ENCODE measurements at regions of chr7 and their contacts with region 1.

Region 1: DNA sequence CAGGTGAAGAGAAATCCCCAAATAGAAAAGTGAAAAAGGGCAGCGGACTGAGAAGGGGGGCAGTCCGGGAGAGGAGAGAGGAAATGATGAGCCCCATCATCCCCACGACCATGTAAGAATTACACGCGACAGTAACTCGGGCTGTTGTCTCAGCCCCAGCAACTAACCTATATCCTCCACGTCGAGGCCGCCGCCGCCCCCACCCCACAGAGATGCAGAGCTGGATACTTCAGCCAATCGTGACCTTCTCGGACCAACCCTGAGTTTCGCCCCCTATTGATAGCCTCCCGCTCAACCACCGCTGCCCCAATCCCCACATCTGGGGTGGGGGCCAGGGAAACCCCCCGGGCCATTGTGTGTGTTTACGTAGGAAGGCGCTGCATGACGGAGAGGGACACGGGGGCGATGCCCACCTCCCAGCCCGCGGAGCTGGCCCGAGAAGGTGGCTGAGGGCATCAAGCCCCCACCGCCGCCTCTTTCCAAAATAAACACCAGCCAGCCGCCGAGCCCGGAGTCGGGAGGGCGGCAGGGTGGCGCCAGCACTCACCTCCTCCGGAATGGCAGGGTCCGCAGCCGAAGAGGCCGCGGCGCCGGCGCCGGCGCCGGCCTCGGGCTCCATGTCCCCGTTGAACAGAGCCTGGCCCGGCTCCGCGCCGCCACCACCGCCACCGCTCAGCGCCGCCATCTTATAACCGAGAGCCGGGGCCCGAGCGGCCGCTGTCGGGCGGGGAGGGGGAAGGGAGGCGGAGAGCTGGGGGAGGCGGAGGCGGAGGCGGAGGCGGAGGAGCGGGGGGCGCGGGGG is 509 bp downstream of the BRAF start:
- DNase-seq: peak; percentile 68
- ATAC-seq: peak; percentile 86
- H3K4me3 ChIP-seq: peak overlapping the region; percentile 99
- H3K27ac ChIP-seq: peak overlapping the region; percentile 91
- H3K4me1 ChIP-seq: no peaks in the 10 kb centered on the region
- H3K27me3 ChIP-seq: no peaks in the 10 kb centered on the region; the same call in 1 of the 2 replicates
- CTCF ChIP-seq: peak; percentile 54
- POLR2A ChIP-seq: peak; percentile 50; the same call in 1 of the 2 replicates
- RAD21 ChIP-seq: no peak

Region 2: GRCh38 chr7:140696680-140697446 is 227.4 kb before region 1 on chr7 and contains the start of gene NDUFB2:
- CTCF ChIA-PET with region 1: no interaction called
- POLR2A ChIA-PET with region 1: no interaction called
- dilution Hi-C with region 1: no loop called
- in situ Hi-C with region 1: no loop called
- intact Hi-C with region 1: loop called (anchors 10 kb)
- DNase-seq: peak; percentile 76
- ATAC-seq: peak; percentile 92
- H3K4me3 ChIP-seq: peak within 1 kb of the TSS; percentile 92
- H3K27ac ChIP-seq: peak within 1 kb of the TSS; percentile 94
- H3K4me1 ChIP-seq: peaks cover 5% of the 10 kb centered on the region
- H3K27me3 ChIP-seq: no peaks in the 10 kb centered on the region
- CTCF ChIP-seq: no peak
- POLR2A ChIP-seq: peak; percentile 81
- RAD21 ChIP-seq: no peak
- total RNA-seq, gene NDUFB2: 81.7 and 136 TPM in 2 replicates

Region 3: GRCh38 chr7:140810830-140811556 is 113.2 kb before region 1 on chr7:
- CTCF ChIA-PET with region 1: interaction called, 3 read pairs
- POLR2A ChIA-PET with region 1: no interaction called
- dilution Hi-C with region 1: no loop called
- in situ Hi-C with region 1: no loop called
- intact Hi-C with region 1: loop called (anchors 1 kb)
- DNase-seq: peak; percentile 66
- ATAC-seq: peak; percentile 94
- H3K4me3 ChIP-seq: no peak overlapping the region
- H3K27ac ChIP-seq: no peak overlapping the region
- H3K4me1 ChIP-seq: peaks cover 2% of the 10 kb centered on the region; the same call in 1 of the 2 replicates
- H3K27me3 ChIP-seq: no peaks in the 10 kb centered on the region
- CTCF ChIP-seq: peak; percentile 72
- POLR2A ChIP-seq: no peak
- RAD21 ChIP-seq: peak; percentile 70

Region 4: GRCh38 chr7:140873434-140873833 is 50.8 kb before region 1 on chr7:
- CTCF ChIA-PET with region 1: no interaction called
- POLR2A ChIA-PET with region 1: no interaction called
- dilution Hi-C with region 1: no loop called
- in situ Hi-C with region 1: no loop called
- intact Hi-C with region 1: loop called (anchors 5 kb)
- DNase-seq: no peak
- ATAC-seq: no peak
- H3K4me3 ChIP-seq: no peak overlapping the region
- H3K27ac ChIP-seq: no peak overlapping the region
- H3K4me1 ChIP-seq: peaks cover 4% of the 10 kb centered on the region
- H3K27me3 ChIP-seq: no peaks in the 10 kb centered on the region
- CTCF ChIP-seq: no peak
- POLR2A ChIP-seq: no peak
- RAD21 ChIP-seq: no peak